AG04450 (cell line): ENCODE measurements at regions of chr18 and their contacts with region 1.

Region 1: GRCh38 chr18:46148810-46149209 is 44.6 kb downstream of the HAUS1 start:
- DNase-seq: no peak
- H3K4me3 ChIP-seq: no peak overlapping the region
- H3K27ac ChIP-seq: no peak overlapping the region
- H3K27me3 ChIP-seq: no peaks in the 10 kb centered on the region
- CTCF ChIP-seq: peak; percentile 70

Region 2: GRCh38 chr18:46084431-46084830 is 64.4 kb before region 1 on chr18:
- CTCF ChIA-PET with region 1: no interaction called
- POLR2A ChIA-PET with region 1: no interaction called
- DNase-seq: no peak
- H3K4me3 ChIP-seq: no peak overlapping the region
- H3K27ac ChIP-seq: no peak overlapping the region
- H3K27me3 ChIP-seq: no peaks in the 10 kb centered on the region
- CTCF ChIP-seq: no peak

Region 3: DNA sequence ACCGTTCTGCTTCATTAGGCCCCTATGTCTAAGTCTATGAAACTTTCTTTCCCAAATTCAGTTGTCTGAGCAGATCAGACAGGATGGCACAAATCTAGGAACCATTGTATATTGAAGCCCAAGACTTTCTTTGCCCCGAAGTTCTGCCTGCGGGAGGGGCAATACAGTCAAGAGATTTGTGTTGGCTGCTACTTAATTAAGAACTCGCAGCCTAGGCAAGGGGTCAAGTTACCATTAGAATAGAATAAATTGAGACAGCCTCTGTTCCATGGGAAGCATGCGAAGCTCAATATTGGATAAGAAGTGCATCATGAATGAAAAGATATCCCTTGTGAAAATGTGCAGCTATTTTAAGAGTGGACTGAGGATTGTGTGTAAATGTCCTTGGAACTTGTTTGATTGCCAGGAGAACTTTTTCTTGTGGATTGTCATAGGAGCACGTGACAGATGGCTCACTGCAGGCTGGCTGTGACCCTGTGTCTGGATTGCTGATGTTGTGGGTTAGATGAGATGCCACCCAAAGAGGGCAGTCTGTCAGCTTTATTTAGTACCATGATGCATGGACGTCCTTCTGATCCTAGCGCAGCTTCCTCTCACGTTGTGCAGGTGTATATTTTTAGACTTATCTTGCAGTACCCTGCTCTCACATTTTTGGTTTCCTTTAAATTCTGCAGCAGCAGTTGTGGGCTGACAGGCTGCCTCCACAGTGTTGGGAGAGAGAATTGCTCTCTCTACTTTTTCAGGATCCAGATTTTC is 13.7 kb before region 1 on chr18:
- CTCF ChIA-PET with region 1: interaction called, 10 read pairs
- POLR2A ChIA-PET with region 1: no interaction called
- DNase-seq: no peak
- H3K4me3 ChIP-seq: no peak overlapping the region
- H3K27ac ChIP-seq: no peak overlapping the region
- H3K27me3 ChIP-seq: no peaks in the 10 kb centered on the region
- CTCF ChIP-seq: no peak

Region 4: GRCh38 chr18:46161703-46162396 is 13.0 kb after region 1 on chr18:
- CTCF ChIA-PET with region 1: interaction called, 23 read pairs
- POLR2A ChIA-PET with region 1: no interaction called
- DNase-seq: no peak
- H3K4me3 ChIP-seq: no peak overlapping the region
- H3K27ac ChIP-seq: no peak overlapping the region
- H3K27me3 ChIP-seq: no peaks in the 10 kb centered on the region
- CTCF ChIP-seq: no peak

Region 5: DNA sequence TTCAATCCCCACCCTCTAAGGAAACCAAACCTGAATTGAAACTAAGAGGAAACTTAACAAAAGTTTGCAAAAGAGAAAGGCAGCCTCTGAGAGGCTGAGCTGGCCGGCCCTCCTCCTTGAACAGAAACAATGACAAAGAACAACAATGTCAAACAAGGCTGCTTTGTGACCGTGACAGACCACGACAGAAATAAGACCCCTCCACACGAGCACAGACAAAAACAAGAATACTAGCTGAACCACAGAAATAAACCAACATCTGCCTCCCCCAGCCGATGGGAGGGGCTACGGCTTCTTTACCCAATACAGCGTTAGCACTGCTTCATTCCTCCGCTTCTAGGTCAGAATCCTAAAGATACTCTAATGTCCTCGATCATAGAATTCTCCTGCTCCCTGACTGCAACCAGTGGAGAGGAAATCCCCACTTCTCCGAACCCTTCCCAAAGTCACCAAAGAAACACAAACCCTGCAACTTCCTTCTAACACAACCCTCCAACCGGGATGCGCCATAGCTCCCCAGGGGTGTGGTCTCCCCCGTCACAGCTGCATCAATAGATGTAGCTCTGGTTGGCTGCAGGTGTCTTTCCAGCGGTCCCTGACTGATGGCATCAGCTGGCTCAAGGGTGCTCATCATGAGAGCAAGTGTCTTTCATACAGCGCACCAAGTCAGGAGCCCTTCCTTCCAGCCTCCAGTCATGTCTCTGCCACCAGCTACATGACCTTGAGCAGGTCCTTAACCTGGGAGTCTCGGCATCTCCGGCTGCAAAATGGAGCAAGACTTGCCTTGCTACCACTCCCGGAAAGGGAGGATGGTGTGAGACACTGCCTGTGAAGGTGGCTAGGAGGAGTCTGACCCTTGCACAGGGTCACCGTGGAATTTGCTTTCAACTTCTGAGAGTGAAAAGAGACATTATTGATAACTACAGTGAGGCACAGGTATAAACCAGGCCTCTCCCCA is 154.0 kb after region 1 on chr18:
- CTCF ChIA-PET with region 1: no interaction called
- POLR2A ChIA-PET with region 1: no interaction called
- DNase-seq: no peak
- H3K4me3 ChIP-seq: no peak overlapping the region
- H3K27ac ChIP-seq: no peak overlapping the region
- H3K27me3 ChIP-seq: peaks cover 13% of the 10 kb centered on the region
- CTCF ChIP-seq: no peak